ENCODE measurements at regions of chr3 and their contacts with region 1.

Region 1: GRCh38 chr3:32238453-32239306 is at the start of gene CMTM8:
- DNase-seq: no peak
- H3K4me3 ChIP-seq: peak within 1 kb of the TSS; percentile 68
- CTCF ChIP-seq: no peak

Region 2: DNA sequence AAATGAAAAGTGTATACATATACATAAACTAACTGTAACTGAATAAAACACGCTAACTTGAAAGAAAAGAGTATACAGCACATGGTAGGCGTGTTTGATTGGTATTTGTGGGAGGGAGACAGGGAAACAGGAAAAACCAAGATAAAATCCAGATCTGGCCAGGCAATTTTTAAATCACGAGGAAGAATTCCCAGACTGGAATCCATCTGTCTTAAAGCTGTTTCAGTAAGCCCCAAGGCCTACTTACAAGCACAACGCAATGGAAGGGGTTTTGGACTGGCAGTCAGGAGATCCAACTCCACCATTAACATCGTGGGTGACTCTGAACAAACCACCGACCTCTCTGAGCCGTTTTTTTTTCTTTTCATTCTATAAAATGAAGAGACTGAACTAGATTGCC is 453.4 kb before region 1 on chr3:
- in situ Hi-C with region 1: loop called (anchors 10 kb)
- DNase-seq: no peak
- H3K4me3 ChIP-seq: no peak overlapping the region
- CTCF ChIP-seq: no peak

Region 3: DNA sequence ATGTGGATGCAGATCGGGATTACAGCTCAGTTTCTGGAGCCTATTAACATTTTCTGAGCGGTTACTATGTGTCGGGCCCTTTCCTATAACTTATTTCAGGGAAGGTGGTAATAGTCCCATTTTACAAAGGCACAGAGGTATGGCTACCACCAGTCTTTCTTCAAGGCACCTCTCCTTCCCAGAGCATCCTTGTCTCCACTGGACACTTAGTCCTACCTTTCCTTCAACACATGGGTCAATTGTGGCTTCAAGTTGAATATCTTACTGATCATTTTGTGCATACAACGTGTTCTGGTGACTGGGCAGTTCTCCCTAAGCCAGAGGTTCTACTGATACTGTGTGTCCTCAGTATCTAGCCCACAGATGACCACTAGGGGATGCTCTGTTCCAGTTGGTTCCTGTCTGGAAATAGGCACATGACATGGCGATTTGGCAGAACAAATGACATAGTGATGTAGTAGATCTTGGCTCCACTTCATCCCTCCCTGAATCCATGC is 60.9 kb before region 1 on chr3:
- in situ Hi-C with region 1: loop called (anchors 5 kb)
- DNase-seq: peak; percentile 47
- H3K4me3 ChIP-seq: no peak overlapping the region
- CTCF ChIP-seq: peak; percentile 93